Heart left ventricle (tissue), 16 donors: ENCODE measurements at regions of chr16 and their contacts with region 1.

Region 1: GRCh38 chr16:53632526-53632925 is 71.1 kb downstream of the RPGRIP1L start:
- DNase-seq: no peak
- ATAC-seq: no peak
- H3K4me3 ChIP-seq: no peak overlapping the region
- H3K27ac ChIP-seq: no peak overlapping the region
- H3K4me1 ChIP-seq: no peaks in the 10 kb centered on the region
- H3K27me3 ChIP-seq: no peaks in the 10 kb centered on the region
- CTCF ChIP-seq: no peak
- POLR2A ChIP-seq: no peak

Region 2: DNA sequence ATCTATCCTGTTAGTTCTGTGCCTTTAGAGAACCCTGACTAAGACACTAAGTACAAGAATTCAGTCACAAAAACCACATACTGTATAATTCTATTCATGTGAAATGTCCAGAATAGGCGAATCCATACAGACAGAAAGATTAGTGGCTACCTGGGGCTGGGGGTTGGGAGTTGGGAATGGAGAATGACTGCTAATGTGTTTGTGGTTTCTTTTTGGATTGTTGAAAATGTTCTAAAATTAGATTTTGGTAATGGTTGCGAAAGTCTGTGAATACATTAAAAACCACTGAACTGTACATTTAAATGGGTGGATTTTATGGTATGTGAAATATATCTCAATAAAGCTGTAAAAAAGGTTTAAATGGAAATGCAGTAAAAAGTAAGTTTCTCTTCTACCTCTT is 49.1 kb before region 1 on chr16:
- intact Hi-C with region 1: loop called in 1 of 10 experiments (anchors 2 kb)
- DNase-seq: no peak
- ATAC-seq: no peak
- H3K4me3 ChIP-seq: no peak overlapping the region
- H3K27ac ChIP-seq: no peak overlapping the region
- H3K4me1 ChIP-seq: no peaks in the 10 kb centered on the region
- H3K27me3 ChIP-seq: no peaks in the 10 kb centered on the region
- CTCF ChIP-seq: no peak
- POLR2A ChIP-seq: no peak